ENCODE measurements at regions of chr13 and their contacts with region 1.

Region 1: GRCh38 chr13:29730253-29730652 is 120.2 kb downstream of the UBL3 start:
- DNase-seq: no peak

Region 2: DNA sequence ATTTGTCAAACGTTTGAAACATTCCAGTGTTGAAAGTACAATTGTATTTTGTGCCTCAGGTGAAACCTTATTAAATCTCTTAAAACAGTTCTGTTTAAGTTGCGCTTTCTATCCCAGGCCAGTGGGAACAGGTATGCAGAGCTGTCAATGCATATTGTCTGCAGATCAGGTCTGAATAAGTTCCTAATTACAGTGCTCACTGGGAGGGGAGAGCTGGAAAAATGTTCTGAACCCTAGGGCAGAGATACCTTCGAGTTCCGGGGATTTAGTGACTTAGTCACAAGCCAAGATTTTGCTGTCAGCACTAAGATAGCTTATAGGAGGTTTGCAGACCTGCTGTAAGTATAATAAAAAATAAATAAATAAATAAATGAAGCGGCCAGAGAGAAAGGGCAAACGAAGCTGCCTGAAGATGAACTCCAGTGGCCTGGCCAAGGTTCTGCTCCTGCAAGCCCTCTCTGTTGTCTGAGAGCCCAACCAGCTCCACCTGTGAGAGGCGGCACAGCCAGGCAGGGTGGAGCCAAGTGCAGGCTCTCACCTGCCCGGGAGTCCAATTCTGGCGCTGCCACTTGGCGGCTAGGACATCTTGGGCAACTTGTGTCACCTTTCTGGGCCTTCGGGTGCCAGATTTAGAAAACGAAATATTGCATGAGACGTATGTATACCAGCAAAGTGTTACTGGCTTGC is 36.8 kb before region 1 on chr13:
- intact Hi-C with region 1: loop called in 1 of 2 experiments (anchors 1 kb)
- DNase-seq: no peak